Ovary (tissue), 10 donors: ENCODE measurements at regions of chr1 and their contacts with region 1.

Region 1: DNA sequence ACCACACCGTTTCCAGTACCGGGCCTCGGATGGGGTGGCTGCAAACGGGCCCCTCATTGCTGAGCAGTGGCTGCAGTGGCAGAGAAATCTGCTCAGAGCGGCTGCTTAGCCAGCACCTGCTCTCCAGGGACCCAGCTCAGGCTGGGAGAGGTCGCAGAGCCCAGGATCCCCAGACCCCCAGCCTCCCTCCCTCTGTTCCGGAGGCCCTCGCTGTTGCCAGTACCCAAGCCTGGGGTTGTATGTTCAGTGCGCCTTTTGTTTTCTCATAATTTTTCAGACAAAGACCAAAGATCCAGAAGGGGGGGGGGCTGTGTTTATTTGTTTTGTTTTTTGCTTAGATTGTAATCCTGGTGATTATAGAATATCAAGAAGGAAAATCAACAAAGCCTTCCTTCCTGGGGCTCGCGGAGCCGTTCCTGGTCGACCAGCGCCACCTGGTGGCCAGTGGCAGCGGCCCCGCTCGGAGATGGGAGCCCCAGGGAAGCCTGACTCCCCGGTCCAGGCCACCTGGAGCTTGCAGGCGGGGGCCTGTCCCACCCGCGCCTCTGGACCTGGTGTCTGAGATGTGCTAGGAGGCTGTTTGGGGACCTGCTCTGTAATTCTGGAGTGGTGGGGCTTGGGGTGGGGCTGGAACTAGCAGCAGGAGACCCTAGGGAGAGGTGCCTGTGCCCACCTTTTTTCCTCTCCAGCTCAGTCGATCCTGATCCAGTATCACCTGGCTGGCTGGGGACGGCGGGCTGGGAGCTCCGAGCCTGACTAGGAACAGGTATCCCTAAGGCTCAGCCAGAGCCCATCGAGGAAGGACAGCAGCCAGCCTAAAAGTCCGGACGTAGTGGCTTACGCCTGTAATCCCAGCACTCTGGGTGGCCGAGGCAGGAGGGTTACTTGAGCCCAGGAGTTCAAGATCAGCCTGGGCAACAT is 123.9 kb upstream of the VAMP3 start:
- DNase-seq: peak; percentile 44 to 84 (median 78)
- H3K4me3 ChIP-seq: no peak overlapping the region
- H3K27ac ChIP-seq: no peak overlapping the region
- H3K4me1 ChIP-seq: no peaks in the 10 kb centered on the region
- H3K27me3 ChIP-seq: no peaks in the 10 kb centered on the region
- CTCF ChIP-seq: peak; percentile 80 to 91 (median 89)
- EP300 ChIP-seq: no peak
- POLR2A ChIP-seq: no peak

Region 2: GRCh38 chr1:6794164-6794563 is 853.1 kb before region 1 on chr1:
- intact Hi-C with region 1: loop called in 1 of 4 experiments (anchors 5 kb)
- DNase-seq: no peak
- H3K4me3 ChIP-seq: no peak overlapping the region
- H3K27ac ChIP-seq: no peak overlapping the region
- H3K4me1 ChIP-seq: no peaks in the 10 kb centered on the region
- H3K27me3 ChIP-seq: no peaks in the 10 kb centered on the region
- CTCF ChIP-seq: peak in 2 of 3 donors; percentile 22 to 44
- EP300 ChIP-seq: no peak
- POLR2A ChIP-seq: no peak

Region 3: GRCh38 chr1:7042322-7043190 is 604.7 kb before region 1 on chr1:
- intact Hi-C with region 1: loop called in 1 of 4 experiments (anchors 10 kb)
- DNase-seq: no peak
- H3K4me3 ChIP-seq: no peak overlapping the region
- H3K27ac ChIP-seq: no peak overlapping the region
- H3K4me1 ChIP-seq: no peaks in the 10 kb centered on the region
- H3K27me3 ChIP-seq: no peaks in the 10 kb centered on the region
- CTCF ChIP-seq: peak in 1 of 3 donors; percentile 14
- EP300 ChIP-seq: no peak
- POLR2A ChIP-seq: no peak

Region 4: GRCh38 chr1:7050751-7051668 is 596.2 kb before region 1 on chr1:
- intact Hi-C with region 1: loop called in 2 of 4 experiments (anchors 10 kb)
- DNase-seq: no peak
- H3K4me3 ChIP-seq: no peak overlapping the region
- H3K27ac ChIP-seq: no peak overlapping the region
- H3K4me1 ChIP-seq: no peaks in the 10 kb centered on the region
- H3K27me3 ChIP-seq: no peaks in the 10 kb centered on the region
- CTCF ChIP-seq: no peak
- EP300 ChIP-seq: no peak
- POLR2A ChIP-seq: no peak

Region 5: DNA sequence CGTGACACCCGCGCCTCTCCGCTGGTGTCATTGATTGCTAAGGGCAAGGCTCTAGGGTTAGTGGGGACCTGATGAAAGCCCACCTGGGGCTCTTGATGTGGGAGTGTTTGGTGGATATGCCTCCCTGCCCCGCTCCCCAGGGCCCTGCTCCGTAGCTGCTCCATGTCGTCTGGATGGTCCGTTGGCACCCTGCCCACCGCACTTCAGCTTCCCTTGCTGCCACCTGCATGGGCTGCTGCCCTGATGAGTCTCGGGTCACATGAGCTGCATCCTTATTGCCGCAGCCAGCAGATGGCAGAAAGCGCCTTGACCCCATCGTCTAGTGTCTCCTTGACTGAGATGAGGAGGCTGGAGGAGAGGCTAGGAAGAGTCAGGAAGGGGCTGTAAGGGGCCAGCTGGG is 422.6 kb before region 1 on chr1:
- intact Hi-C with region 1: loop called in 1 of 4 experiments (anchors 10 kb)
- DNase-seq: no peak
- H3K4me3 ChIP-seq: no peak overlapping the region
- H3K27ac ChIP-seq: no peak overlapping the region
- H3K4me1 ChIP-seq: no peaks in the 10 kb centered on the region
- H3K27me3 ChIP-seq: no peaks in the 10 kb centered on the region
- CTCF ChIP-seq: no peak
- EP300 ChIP-seq: no peak
- POLR2A ChIP-seq: no peak